ENCODE measurements at regions of chr11 and their contacts with region 1.

Region 1: DNA sequence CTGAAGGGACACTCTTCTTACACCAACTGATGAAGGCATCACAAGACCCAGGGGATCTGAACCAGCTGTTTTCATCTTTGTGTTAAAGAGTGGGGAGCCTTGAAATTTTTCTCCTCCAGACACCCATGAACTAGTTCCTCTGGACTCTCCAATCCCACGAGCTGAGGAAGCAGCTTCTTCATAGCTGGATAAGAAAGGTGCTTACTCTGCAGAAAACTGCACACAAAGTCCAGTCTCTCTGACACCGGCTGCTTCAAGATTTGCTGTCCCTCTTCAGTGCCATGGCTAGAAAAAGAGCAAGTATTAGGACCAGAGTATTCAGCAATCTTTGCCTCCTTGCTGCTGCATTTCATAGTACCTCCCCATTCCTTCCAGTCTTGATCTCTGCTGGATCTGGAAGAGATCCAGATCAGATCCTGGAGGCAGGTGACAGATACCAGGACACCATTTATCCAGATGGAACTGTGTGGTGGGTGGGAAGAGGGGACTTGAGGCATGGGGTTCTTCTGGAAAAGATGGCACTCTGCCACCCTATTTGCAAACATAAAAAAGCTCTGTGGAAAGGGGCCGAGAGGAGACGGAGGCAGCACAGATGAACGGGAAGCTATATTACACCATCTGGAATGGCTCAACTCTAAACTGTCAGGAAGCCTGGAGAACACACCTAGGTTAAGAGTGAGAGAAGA is 25.5 kb downstream of the IL18BP start:
- DNase-seq: no peak
- ATAC-seq: no peak
- H3K4me3 Mint-ChIP-seq: no peak overlapping the region
- H3K27ac Mint-ChIP-seq: peak overlapping the region; percentile 59
- H3K4me1 Mint-ChIP-seq: peaks cover 17% of the 10 kb centered on the region
- H3K27me3 Mint-ChIP-seq: no peaks in the 10 kb centered on the region

Region 2: GRCh38 chr11:72040726-72041441 is 16.7 kb after region 1 on chr11:
- CTCF ChIA-PET with region 1: interaction called, 30 read pairs
- DNase-seq: peak; percentile 72
- ATAC-seq: peak; percentile 76
- H3K4me3 Mint-ChIP-seq: no peak overlapping the region
- H3K27ac Mint-ChIP-seq: no peak overlapping the region
- H3K4me1 Mint-ChIP-seq: peaks cover 11% of the 10 kb centered on the region
- H3K27me3 Mint-ChIP-seq: no peaks in the 10 kb centered on the region

Region 3: DNA sequence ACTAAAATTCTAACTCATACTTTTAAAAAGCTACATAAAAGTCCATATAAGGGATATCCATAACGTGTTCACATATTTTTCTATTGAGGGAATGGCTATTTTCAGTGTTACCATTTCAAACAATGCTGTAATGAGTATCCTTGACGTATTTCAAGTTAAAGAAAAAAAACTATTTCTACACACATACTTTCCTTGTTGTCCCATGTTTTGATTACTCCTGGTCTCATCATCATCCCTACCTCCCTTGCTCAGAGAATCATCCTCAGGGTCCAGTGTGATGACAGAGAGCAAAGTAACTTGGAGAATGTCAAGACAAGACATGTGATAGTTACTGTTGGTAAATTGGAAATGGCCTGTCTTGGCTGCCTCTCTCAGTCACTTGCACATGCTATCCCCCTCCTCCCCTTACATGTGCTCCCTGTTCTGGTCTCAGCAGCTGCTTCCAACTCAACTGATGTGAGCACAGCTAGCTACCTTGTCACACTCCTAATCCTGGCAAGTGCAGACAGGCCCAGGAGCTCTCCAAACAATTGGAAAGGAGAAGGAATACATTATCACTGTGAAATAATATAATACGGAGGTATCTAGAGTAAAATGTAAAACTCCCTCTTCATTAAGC is 34.3 kb after region 1 on chr11:
- CTCF ChIA-PET with region 1: interaction called, 11 read pairs
- DNase-seq: no peak
- ATAC-seq: no peak
- H3K4me3 Mint-ChIP-seq: no peak overlapping the region
- H3K27ac Mint-ChIP-seq: no peak overlapping the region
- H3K4me1 Mint-ChIP-seq: peaks cover 8% of the 10 kb centered on the region
- H3K27me3 Mint-ChIP-seq: no peaks in the 10 kb centered on the region

Region 4: GRCh38 chr11:72080975-72081644 is 56.9 kb after region 1 on chr11:
- CTCF ChIA-PET with region 1: interaction called, 25 read pairs
- DNase-seq: no peak
- ATAC-seq: no peak
- H3K4me3 Mint-ChIP-seq: peak overlapping the region; percentile 84
- H3K27ac Mint-ChIP-seq: peak overlapping the region; percentile 97
- H3K4me1 Mint-ChIP-seq: peaks cover 48% of the 10 kb centered on the region
- H3K27me3 Mint-ChIP-seq: no peaks in the 10 kb centered on the region

Region 5: GRCh38 chr11:72100462-72100861 is 76.2 kb after region 1 on chr11:
- CTCF ChIA-PET with region 1: interaction called, 91 read pairs
- DNase-seq: no peak
- ATAC-seq: no peak
- H3K4me3 Mint-ChIP-seq: no peak overlapping the region
- H3K27ac Mint-ChIP-seq: peak overlapping the region; percentile 60
- H3K4me1 Mint-ChIP-seq: peaks cover 39% of the 10 kb centered on the region
- H3K27me3 Mint-ChIP-seq: no peaks in the 10 kb centered on the region

Region 6: GRCh38 chr11:72129381-72129780 is 105.2 kb after region 1 on chr11:
- CTCF ChIA-PET with region 1: no interaction called
- DNase-seq: no peak
- ATAC-seq: no peak
- H3K4me3 Mint-ChIP-seq: no peak overlapping the region
- H3K27ac Mint-ChIP-seq: no peak overlapping the region
- H3K4me1 Mint-ChIP-seq: no peaks in the 10 kb centered on the region
- H3K27me3 Mint-ChIP-seq: peaks cover 53% of the 10 kb centered on the region

Region 7: GRCh38 chr11:72189461-72190275 is 165.5 kb after region 1 on chr11:
- CTCF ChIA-PET with region 1: interaction called, 18 read pairs
- DNase-seq: no peak
- ATAC-seq: no peak
- H3K4me3 Mint-ChIP-seq: no peak overlapping the region
- H3K27ac Mint-ChIP-seq: no peak overlapping the region
- H3K4me1 Mint-ChIP-seq: no peaks in the 10 kb centered on the region
- H3K27me3 Mint-ChIP-seq: no peaks in the 10 kb centered on the region

Measured in activated CD8-positive, alpha-beta memory T cell treated with anti-CD3 and anti-CD28 coated beads, Interleukin-2, amount 10 ng/mL, durations not matched to agents 7 days and 5 days (primary cell).